CD8-positive, alpha-beta T cell (primary cell): ENCODE measurements at regions of chr15 and their contacts with region 1.

Region 1: DNA sequence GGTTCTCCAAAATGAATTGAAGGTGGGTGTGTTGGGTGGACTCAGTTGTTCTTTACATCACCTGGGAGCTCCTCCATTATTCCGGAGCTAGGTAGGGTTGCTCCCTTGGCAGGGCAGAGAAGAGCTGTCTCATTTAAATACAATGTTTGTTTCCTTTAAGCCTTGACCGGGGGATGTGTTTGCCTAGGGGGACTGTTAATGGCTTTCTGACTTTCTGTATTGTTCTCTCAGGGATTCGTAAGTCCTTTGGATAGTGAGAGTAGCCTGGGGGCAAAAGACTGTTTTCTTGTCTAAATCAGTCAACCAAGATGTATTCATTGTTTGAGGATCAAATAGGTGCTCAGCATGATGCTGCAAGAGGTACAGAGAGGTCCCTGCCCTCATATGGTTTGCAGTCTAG is 71.1 kb downstream of the CDAN1 start:
- DNase-seq: no peak
- ATAC-seq: no peak
- H3K4me3 ChIP-seq: no peak overlapping the region
- H3K4me3 Mint-ChIP-seq: no peak overlapping the region
- H3K27ac ChIP-seq: no peak overlapping the region
- H3K27ac Mint-ChIP-seq: no peak overlapping the region
- H3K4me1 ChIP-seq: no peaks in the 10 kb centered on the region
- H3K4me1 Mint-ChIP-seq: no peaks in the 10 kb centered on the region
- H3K27me3 ChIP-seq: no peaks in the 10 kb centered on the region
- H3K27me3 Mint-ChIP-seq: no peaks in the 10 kb centered on the region
- CTCF ChIP-seq: no peak

Region 2: GRCh38 chr15:41730543-41730942 is 935.3 kb before region 1 on chr15:
- CTCF ChIA-PET with region 1: no interaction called
- POLR2A ChIA-PET with region 1: no interaction called
- intact Hi-C with region 1: loop called in 1 of 2 experiments (anchors 10 kb)
- DNase-seq: no peak
- ATAC-seq: no peak
- H3K4me3 ChIP-seq: no peak overlapping the region
- H3K4me3 Mint-ChIP-seq: no peak overlapping the region
- H3K27ac ChIP-seq: no peak overlapping the region
- H3K27ac Mint-ChIP-seq: no peak overlapping the region
- H3K4me1 ChIP-seq: no peaks in the 10 kb centered on the region
- H3K4me1 Mint-ChIP-seq: no peaks in the 10 kb centered on the region
- H3K27me3 ChIP-seq: no peaks in the 10 kb centered on the region
- H3K27me3 Mint-ChIP-seq: no peaks in the 10 kb centered on the region
- CTCF ChIP-seq: no peak

Region 3: DNA sequence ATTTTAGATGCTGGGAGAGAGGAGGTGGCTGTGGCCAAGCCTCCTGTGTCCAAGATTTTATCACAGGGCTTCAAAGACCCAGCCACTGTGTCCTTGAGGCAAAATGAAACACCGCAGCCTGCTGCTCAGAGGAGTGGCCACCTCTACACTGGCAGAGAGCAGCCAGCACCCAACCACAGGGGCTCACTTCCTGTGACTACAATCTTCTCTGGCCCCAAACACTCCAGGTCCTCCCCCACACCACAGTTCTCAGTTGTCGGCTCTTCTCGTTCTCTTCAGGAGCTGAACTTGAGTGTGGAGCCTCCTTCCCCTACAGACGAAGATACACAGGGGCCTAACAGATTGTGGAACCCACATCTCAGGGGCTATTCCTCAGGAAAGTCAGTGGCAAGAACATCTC is 25.5 kb after region 1 on chr15:
- CTCF ChIA-PET with region 1: no interaction called
- POLR2A ChIA-PET with region 1: no interaction called
- intact Hi-C with region 1: no loop called
- DNase-seq: no peak
- ATAC-seq: no peak
- H3K4me3 ChIP-seq: no peak overlapping the region
- H3K4me3 Mint-ChIP-seq: no peak overlapping the region
- H3K27ac ChIP-seq: no peak overlapping the region
- H3K27ac Mint-ChIP-seq: no peak overlapping the region
- H3K4me1 ChIP-seq: no peaks in the 10 kb centered on the region
- H3K4me1 Mint-ChIP-seq: peaks cover 4% of the 10 kb centered on the region
- H3K27me3 ChIP-seq: no peaks in the 10 kb centered on the region
- H3K27me3 Mint-ChIP-seq: no peaks in the 10 kb centered on the region
- CTCF ChIP-seq: no peak